IMR-90 (cell line): ENCODE measurements at regions of chr11 and their contacts with region 1.

Region 1: DNA sequence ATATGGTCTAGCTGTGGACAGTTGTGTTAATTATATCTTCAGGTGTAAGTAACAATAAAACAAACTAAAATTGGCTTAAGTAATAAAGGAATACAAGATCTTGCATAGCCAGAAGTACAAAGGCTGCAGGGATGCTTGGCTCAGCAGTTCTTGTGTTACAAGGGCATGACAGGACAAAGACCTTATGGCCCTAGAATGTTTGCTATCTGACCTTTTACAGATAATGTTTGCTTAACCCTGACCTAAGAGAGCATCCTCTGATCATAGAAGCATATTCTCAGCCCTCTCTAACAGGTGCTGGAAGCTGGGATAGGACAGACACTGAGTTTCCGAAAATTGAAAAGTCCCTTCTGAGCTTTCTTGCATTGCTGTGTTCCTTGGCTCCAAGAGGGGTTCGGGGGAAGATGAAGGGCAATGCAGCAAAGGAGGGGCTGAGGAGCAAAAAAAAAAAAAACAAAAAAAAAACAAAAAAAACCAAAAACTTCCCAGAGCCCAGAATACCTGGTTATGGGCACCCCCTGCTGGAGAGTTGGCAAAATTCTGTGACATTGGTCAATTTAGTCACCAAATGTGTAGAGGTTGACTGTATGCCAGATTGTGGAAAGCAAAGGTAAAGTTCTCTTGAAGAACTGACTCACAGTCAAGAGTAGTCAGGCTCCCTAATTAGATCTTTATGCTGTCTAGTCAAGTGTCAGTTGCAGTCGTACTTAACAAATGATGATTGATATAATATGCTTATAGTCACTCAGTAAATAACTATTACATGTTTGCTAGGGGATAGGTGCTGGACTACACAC is 10.4 kb upstream of the HIKESHI start:
- DNase-seq: peak; percentile 55
- ATAC-seq: peak; percentile 71; the same call in 1 of the 2 replicates
- H3K4me3 ChIP-seq: no peak overlapping the region
- H3K27ac ChIP-seq: no peak overlapping the region
- H3K4me1 ChIP-seq: peaks cover 2% of the 10 kb centered on the region; the same call in 1 of the 2 replicates
- H3K27me3 ChIP-seq: peaks cover 2% of the 10 kb centered on the region; the same call in 1 of the 2 replicates
- CTCF ChIP-seq: peak; percentile 69
- POLR2A ChIP-seq: no peak
- RAD21 ChIP-seq: peak; percentile 81

Region 2: DNA sequence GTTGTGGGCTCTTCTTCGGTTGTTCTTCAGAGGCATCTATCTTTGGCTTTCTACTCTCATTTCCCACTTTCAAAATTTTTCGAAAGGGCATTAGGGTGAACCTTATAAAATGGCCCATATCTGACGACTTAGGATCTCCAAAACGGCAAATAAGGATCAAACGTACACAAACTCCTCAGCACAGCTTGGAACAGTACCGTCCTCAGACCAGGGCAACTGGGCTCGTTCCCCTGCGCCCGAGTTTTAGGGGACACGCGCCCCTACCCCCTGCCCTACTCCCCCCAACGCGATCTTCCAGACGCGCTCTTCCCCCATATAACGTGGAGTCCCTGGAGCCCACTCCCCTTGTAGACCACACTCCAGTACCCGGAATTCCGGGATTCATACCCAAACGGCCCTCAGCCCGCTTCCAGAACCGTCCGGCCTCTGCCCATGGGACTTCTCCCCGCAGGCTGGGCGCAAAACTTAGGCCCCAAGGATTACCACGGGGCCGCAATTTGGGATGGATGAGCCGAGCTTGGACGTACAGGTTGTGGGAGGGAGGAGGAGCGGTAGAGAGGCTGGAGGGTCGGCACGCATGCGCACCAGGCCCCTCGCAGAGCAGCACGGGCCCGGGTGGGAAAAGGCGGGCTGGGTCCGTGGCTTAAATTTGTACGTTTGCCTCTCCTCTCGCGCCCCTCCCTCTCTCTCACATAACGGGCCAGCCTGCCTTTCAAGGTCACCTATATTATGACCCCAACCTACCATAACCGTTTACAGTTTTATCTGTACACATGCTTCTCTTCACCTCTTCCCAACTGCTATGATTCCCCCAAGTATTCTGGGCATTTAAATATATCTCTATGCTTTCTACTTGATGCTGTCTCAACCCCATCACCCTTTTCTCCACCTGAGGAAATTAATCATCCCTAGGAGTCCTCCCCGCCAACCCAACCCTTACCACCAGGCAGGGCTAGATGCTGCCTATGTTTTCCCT is 609.0 kb before region 1 on chr11:
- CTCF ChIA-PET with region 1: no interaction called
- POLR2A ChIA-PET with region 1: no interaction called
- dilution Hi-C with region 1: no loop called
- in situ Hi-C with region 1: loop called (anchors 25 kb)
- intact Hi-C with region 1: no loop called
- DNase-seq: peak; percentile 47
- ATAC-seq: peak; percentile 24; the same call in 1 of the 2 replicates
- H3K4me3 ChIP-seq: peak overlapping the region; percentile 89
- H3K27ac ChIP-seq: peak overlapping the region; percentile 78
- H3K4me1 ChIP-seq: peaks cover 2% of the 10 kb centered on the region; the same call in 1 of the 2 replicates
- H3K27me3 ChIP-seq: no peaks in the 10 kb centered on the region
- CTCF ChIP-seq: no peak
- POLR2A ChIP-seq: no peak
- RAD21 ChIP-seq: no peak

Region 3: GRCh38 chr11:85867751-85868150 is 423.9 kb before region 1 on chr11:
- CTCF ChIA-PET with region 1: no interaction called
- POLR2A ChIA-PET with region 1: no interaction called
- dilution Hi-C with region 1: no loop called
- in situ Hi-C with region 1: loop called (anchors 10 kb)
- intact Hi-C with region 1: no loop called
- DNase-seq: peak; percentile 57
- ATAC-seq: peak; percentile 80
- H3K4me3 ChIP-seq: no peak overlapping the region
- H3K27ac ChIP-seq: no peak overlapping the region
- H3K4me1 ChIP-seq: no peaks in the 10 kb centered on the region
- H3K27me3 ChIP-seq: no peaks in the 10 kb centered on the region
- CTCF ChIP-seq: no peak
- POLR2A ChIP-seq: no peak
- RAD21 ChIP-seq: no peak

Region 4: GRCh38 chr11:85918910-85919794 is 372.5 kb before region 1 on chr11:
- CTCF ChIA-PET with region 1: interaction called, 10 read pairs
- POLR2A ChIA-PET with region 1: no interaction called
- dilution Hi-C with region 1: no loop called
- in situ Hi-C with region 1: no loop called
- intact Hi-C with region 1: no loop called
- DNase-seq: no peak
- ATAC-seq: no peak
- H3K4me3 ChIP-seq: no peak overlapping the region
- H3K27ac ChIP-seq: no peak overlapping the region
- H3K4me1 ChIP-seq: no peaks in the 10 kb centered on the region; the same call in 1 of the 2 replicates
- H3K27me3 ChIP-seq: peaks cover 8% of the 10 kb centered on the region
- CTCF ChIP-seq: no peak
- POLR2A ChIP-seq: no peak
- RAD21 ChIP-seq: no peak

Region 5: DNA sequence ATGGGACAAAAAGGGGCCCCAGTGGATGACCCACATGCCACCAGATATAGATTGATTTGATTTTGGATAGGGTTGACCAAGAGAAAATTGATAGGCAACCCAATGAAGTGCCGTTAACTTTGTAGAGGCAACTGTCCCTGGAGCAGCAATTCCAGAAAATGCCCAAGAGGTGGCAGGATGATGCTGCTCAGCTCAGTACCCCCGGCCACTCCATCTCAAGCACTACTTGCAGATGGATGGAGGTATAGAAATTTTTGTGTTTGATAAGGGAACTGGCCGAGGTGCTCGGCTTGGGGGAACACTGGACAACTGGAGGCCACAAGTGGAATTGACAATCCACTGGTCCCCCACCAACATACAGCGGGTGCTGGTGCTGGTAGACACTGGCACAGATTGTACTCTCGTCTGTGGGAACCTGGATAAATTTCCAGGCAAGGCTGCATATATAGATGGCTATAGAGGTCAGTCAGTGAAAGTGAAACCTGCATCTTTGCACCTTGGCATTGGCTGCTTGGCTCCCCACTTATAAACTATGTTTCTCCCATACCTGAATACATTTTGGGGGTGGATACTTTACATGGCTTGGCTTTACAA is 350.2 kb before region 1 on chr11:
- CTCF ChIA-PET with region 1: interaction called, 4 read pairs
- POLR2A ChIA-PET with region 1: no interaction called
- dilution Hi-C with region 1: no loop called
- in situ Hi-C with region 1: no loop called
- intact Hi-C with region 1: loop called (anchors 1 kb)
- DNase-seq: peak; percentile 74
- ATAC-seq: peak; percentile 93
- H3K4me3 ChIP-seq: no peak overlapping the region
- H3K27ac ChIP-seq: no peak overlapping the region
- H3K4me1 ChIP-seq: peaks cover 5% of the 10 kb centered on the region; the same call in 1 of the 2 replicates
- H3K27me3 ChIP-seq: no peaks in the 10 kb centered on the region
- CTCF ChIP-seq: peak; percentile 74
- POLR2A ChIP-seq: no peak
- RAD21 ChIP-seq: peak; percentile 81

Region 6: DNA sequence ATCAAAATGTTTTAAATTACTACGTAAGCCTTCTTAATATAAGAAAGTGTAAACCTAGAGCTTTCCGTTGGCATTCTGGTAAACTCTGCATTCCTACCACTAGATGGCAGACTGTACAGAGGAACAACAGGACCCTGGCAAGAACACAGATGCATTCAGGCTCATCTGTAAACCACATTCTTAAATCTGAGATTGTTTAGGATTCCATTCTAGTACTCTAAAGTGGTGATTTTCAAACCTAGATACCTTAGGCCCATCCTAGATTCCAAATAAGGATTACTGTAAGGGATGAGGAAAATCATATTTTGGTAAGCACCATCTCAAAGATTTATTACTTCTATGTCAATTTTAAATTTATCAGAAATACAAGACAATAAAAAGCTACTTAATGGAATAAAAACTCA is 249.7 kb before region 1 on chr11:
- CTCF ChIA-PET with region 1: no interaction called
- POLR2A ChIA-PET with region 1: no interaction called
- dilution Hi-C with region 1: no loop called
- in situ Hi-C with region 1: no loop called
- intact Hi-C with region 1: loop called (anchors 5 kb)
- DNase-seq: peak; percentile 94
- ATAC-seq: peak; percentile 89
- H3K4me3 ChIP-seq: no peak overlapping the region
- H3K27ac ChIP-seq: no peak overlapping the region
- H3K4me1 ChIP-seq: peaks cover 13% of the 10 kb centered on the region
- H3K27me3 ChIP-seq: no peaks in the 10 kb centered on the region
- CTCF ChIP-seq: peak; percentile 94
- POLR2A ChIP-seq: no peak
- RAD21 ChIP-seq: peak; percentile 90

Region 7: DNA sequence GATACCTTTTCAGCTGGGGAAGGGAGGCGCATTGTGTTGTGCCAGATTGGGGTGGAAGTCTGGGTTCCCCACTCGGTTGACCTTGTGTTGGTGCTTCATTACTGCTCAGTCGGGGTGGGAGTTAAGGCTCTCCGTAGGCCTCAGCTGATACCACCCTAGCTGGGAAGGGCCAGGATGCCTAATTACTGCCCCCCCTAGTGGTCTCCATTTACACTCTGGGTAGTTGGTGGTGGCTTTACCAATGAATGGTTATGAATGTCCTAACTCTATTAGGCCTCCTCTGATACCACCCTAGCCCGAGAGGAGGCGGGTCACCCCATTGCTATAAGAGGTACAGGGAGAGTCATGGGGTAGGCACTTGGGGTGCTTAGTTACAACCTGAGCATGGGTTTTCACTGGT is 17.2 kb before region 1 on chr11:
- CTCF ChIA-PET with region 1: no interaction called
- POLR2A ChIA-PET with region 1: no interaction called
- dilution Hi-C with region 1: no loop called
- in situ Hi-C with region 1: no loop called
- intact Hi-C with region 1: no loop called
- DNase-seq: no peak
- ATAC-seq: no peak
- H3K4me3 ChIP-seq: no peak overlapping the region
- H3K27ac ChIP-seq: no peak overlapping the region
- H3K4me1 ChIP-seq: peaks cover 3% of the 10 kb centered on the region; the same call in 1 of the 2 replicates
- H3K27me3 ChIP-seq: no peaks in the 10 kb centered on the region
- CTCF ChIP-seq: 0 out of 2 replicates have a peak, but pooled peaks have one; percentile 2
- POLR2A ChIP-seq: no peak
- RAD21 ChIP-seq: no peak

Region 8: DNA sequence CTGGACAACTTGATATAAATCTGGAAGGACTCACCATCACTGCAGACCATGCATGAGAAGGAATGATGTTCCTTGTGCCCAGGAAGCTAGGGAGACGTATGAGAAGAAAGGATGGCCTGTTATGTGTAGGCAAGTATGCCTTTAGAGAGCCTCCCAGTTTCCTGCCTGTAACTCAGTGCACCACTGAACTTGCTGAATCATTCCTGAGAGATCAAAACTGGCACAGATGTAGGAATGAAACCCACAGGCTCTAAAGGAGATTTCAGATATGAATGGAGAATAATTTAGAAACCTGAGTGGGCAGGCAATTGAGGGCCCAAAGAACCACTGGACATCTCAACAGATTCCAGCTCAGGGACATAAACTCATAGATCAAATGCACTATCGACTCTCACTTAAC is 470.3 kb after region 1 on chr11:
- CTCF ChIA-PET with region 1: no interaction called
- POLR2A ChIA-PET with region 1: no interaction called
- dilution Hi-C with region 1: no loop called
- in situ Hi-C with region 1: no loop called
- intact Hi-C with region 1: no loop called
- DNase-seq: peak; percentile 72
- ATAC-seq: peak; percentile 82
- H3K4me3 ChIP-seq: no peak overlapping the region
- H3K27ac ChIP-seq: peak overlapping the region; percentile 42; the same call in 1 of the 2 replicates
- H3K4me1 ChIP-seq: peaks cover 10% of the 10 kb centered on the region; the same call in 1 of the 2 replicates
- H3K27me3 ChIP-seq: no peaks in the 10 kb centered on the region
- CTCF ChIP-seq: no peak
- POLR2A ChIP-seq: no peak
- RAD21 ChIP-seq: no peak